Activated CD4-positive, alpha-beta T cell treated with anti-CD3 and anti-CD28 coated beads for 36 hours (primary cell): ENCODE measurements at regions of chr11 and their contacts with region 1.

Region 1: DNA sequence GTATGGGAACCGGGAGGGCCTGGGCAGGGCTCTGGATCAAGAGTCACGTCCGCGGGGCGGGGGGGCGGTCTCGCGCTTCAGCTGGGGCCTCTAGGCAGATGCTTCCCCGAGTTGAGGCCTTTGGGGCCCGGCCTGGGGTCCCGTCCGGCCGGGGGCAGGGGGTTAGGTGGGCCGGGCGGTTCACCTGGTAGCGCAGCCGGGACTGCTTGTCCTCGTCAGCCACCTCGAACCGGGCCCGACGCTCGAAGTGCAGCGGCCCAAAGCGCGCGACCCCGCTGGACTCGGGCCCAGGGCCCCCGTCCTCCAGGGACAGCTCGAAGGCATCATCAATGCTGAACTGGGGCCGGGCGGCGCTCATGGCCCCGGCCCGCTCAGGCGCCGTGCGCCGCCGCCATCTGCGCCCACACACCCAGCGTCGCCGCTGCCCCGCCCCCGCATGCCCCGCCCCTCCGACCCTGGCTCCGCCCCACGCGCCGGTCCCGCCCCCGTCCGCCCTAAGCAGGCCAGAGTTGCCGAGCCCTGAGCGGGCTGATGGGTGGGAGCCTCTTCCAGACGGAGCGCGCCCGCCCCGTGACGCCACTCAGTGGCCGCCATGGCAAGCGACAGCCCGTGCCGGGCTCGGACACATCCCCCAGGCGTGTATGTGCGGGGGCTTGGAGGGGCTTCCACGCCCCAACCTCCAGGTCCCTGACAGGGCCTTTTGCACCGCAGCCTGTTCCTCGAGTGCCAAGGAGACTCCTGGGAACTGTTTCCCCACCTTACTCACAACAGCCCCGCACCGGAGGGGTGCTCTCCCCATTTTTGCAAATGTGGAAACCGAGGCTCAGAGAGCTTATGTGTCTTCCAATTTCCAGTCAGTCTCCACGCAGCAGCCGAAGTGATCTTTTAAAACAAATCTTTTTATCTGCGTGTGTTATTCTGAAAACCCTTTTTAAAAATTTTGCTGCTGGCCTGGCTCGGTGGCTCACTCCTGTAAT is at the start of gene TMEM134:
- DNase-seq: peak; percentile 97
- ATAC-seq: peak; percentile 78
- H3K4me3 Mint-ChIP-seq: peak within 1 kb of the TSS; percentile 82
- H3K27ac Mint-ChIP-seq: peak within 1 kb of the TSS; percentile 86
- H3K4me1 Mint-ChIP-seq: peaks cover 23% of the 10 kb centered on the region
- H3K27me3 Mint-ChIP-seq: no peaks in the 10 kb centered on the region
- total RNA-seq, gene TMEM134: 69.9 to 74.7 TPM

Region 2: GRCh38 chr11:67391304-67392132 is 77.6 kb before region 1 on chr11 and contains the start of gene RAD9A:
- CTCF ChIA-PET with region 1: interaction called, 3 read pairs
- POLR2A ChIA-PET with region 1: no interaction called
- intact Hi-C with region 1: loop called in 1 of 2 experiments (anchors 1 kb)
- DNase-seq: peak; percentile 97
- ATAC-seq: peak; percentile 74
- H3K4me3 Mint-ChIP-seq: peak within 1 kb of the TSS; percentile 89
- H3K27ac Mint-ChIP-seq: peak within 1 kb of the TSS; percentile 80
- H3K4me1 Mint-ChIP-seq: peaks cover 34% of the 10 kb centered on the region
- H3K27me3 Mint-ChIP-seq: no peaks in the 10 kb centered on the region
- total RNA-seq, gene RAD9A: 28.8 to 30.0 TPM

Region 3: DNA sequence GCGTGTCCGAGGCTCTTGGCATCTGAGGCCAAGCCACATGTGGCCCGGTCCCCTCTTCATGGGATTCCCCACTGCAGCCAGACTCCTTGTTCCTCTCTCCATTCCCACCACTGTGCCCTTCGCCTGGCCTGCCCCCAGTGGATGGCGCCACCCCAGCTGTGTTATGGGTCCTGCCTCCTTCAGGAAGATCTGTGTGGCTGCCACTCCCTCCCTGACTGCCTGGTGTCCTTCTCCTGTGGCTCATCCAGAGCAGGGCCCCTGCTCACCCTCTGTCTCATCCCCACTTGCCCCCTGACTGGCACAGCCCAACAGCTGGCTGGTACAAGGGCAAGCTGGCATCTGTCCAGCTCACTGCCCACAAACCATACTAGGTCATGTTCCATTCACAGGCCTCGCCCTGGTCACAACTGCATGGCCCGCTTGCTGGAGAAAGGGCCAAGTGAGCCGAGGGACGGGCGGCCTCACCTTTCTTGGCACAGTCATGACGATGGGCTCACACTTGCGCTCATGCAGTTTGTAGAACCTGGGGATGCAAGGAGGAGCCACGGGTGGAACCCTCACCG is 29.7 kb before region 1 on chr11:
- CTCF ChIA-PET with region 1: interaction called, 9 read pairs
- POLR2A ChIA-PET with region 1: no interaction called
- intact Hi-C with region 1: loop called (anchors 1 to 2 kb)
- DNase-seq: peak; percentile 77
- ATAC-seq: peak; percentile 2
- H3K4me3 Mint-ChIP-seq: peak overlapping the region; percentile 84
- H3K27ac Mint-ChIP-seq: peak overlapping the region; percentile 97
- H3K4me1 Mint-ChIP-seq: peaks cover 49% of the 10 kb centered on the region
- H3K27me3 Mint-ChIP-seq: no peaks in the 10 kb centered on the region

Region 4: DNA sequence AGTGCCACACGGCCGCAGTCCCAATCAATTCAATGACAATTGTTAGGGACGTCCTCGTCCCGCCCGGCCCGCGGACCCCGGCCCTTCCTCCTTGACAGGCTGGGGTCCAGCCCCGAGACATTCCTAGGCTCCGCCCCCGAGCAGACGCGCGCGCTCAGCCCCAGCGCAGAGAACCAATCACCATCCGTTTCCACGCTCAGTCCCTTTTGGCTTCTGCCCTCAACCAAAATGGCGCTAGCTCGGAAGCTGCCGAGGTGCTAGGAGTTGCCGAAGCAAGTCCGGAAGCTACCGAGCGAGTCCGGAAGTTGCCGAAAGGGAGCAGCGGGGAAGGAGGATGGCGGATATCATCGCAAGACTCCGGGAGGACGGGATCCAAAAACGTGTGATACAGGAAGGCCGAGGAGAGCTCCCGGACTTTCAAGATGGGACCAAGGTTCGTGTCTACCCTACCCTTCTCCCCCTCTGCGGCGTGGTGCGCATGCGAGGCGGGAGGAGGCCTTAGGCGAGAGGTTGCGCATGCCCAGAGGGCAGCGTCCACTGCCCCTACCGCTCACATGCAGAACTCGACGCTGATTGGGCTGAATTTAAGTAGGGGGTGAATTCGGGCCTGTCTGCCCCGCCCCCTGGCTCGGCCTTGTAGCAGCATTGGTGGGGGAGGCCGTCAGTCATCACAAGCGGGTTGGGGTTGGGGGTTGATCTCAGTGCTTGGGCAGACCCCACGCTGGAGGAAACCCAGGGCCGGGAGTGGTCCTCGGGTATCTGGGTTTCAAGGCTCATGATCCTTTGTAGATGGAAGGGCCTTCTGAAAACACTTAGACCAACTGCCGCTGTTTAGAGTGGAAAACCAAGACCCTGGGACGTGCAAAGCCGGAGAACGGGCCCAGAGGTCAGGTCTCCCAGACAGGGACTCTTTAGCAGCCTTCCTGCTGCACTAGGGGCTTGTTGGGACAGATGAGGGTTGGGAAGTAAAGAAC is 14.0 kb after region 1 on chr11 and contains the start of gene AIP:
- CTCF ChIA-PET with region 1: interaction called, 5 read pairs
- POLR2A ChIA-PET with region 1: interaction called, 4 read pairs
- intact Hi-C with region 1: loop called (anchors 1 kb)
- DNase-seq: peak; percentile 99
- ATAC-seq: peak; percentile 72
- H3K4me3 Mint-ChIP-seq: peak within 1 kb of the TSS; percentile 86
- H3K27ac Mint-ChIP-seq: peak within 1 kb of the TSS; percentile 99
- H3K4me1 Mint-ChIP-seq: peaks cover 50% of the 10 kb centered on the region
- H3K27me3 Mint-ChIP-seq: no peaks in the 10 kb centered on the region
- total RNA-seq, gene AIP: 142 to 144 TPM

Region 5: DNA sequence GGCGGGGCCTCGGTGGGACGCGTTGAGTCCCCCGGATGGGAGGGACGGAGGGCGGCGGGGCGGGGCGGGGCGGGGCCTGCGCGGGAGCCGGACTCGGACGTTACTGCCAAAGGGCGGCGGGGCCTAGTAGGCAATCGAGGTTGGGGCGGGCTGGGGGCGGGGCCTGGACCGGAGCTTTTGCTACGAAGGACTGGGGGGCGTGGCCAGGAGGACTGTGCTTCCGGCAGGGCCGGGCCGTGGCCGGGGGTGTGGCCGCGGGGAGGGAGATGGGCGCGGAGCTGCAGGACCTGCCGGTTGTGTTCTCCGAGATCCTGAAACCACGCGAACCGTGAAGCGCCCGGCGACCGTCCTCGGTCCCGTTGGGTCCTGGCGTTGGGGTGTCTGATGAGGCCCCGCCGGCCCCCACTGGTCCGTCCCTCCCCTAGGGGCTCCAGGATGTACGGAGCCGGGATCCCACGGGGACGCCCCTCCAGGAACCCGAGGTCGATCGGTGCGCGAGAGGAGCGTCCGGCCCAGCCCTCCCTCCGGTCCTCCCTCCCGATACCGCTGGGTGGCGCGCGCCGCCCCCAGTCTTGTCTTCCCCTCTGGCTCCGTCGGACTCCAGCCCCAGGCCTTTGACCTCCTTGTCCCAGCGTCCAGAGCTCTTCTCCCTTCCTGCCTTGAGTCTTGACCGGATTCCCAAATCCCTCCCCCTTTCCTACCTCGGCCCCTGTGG is 161.3 kb after region 1 on chr11:
- CTCF ChIA-PET with region 1: interaction called, 3 read pairs
- POLR2A ChIA-PET with region 1: no interaction called
- intact Hi-C with region 1: loop called in 1 of 2 experiments (anchors 1 kb)
- DNase-seq: peak; percentile 99
- ATAC-seq: peak; percentile 79
- H3K4me3 Mint-ChIP-seq: peak overlapping the region; percentile 79
- H3K27ac Mint-ChIP-seq: peak overlapping the region; percentile 73
- H3K4me1 Mint-ChIP-seq: peaks cover 7% of the 10 kb centered on the region
- H3K27me3 Mint-ChIP-seq: no peaks in the 10 kb centered on the region